Body of pancreas (tissue), 4 donors: ENCODE measurements at regions of chr14 and their contacts with region 1.

Region 1: GRCh38 chr14:76050797-76051392 is 65.3 kb downstream of the IFT43 start:
- DNase-seq: peak; percentile 58 to 67 (median 62)
- ATAC-seq: peak; percentile 64
- H3K4me3 ChIP-seq: no peak overlapping the region
- H3K27ac ChIP-seq: no peak overlapping the region
- H3K4me1 ChIP-seq: no peaks in the 10 kb centered on the region
- H3K27me3 ChIP-seq: no peaks in the 10 kb centered on the region
- CTCF ChIP-seq: peak; percentile 46 to 88 (median 77)
- POLR2A ChIP-seq: no peak

Region 2: DNA sequence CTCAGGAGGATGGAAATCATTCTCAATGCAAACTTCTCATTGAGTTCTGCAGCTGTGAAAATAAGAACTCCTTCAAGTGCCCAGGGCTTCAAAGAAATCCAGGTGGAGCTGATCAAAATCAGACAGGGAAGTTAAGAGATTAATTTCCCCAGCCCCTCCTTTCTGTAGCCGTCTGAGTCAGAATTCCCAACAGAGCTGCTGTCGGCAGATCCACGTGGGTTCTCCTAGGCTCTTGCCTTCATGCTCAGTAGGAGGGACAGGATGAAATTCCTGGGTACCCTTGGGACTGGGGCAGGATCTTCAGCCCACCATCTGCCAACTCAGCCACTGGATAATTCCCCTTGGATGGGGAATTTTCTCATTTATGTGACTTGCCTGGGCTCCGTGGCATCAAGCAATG is 82.4 kb before region 1 on chr14:
- intact Hi-C with region 1: no loop called
- DNase-seq: no peak
- ATAC-seq: peak; percentile 47
- H3K4me3 ChIP-seq: no peak overlapping the region
- H3K27ac ChIP-seq: no peak overlapping the region
- H3K4me1 ChIP-seq: peaks cover 9% of the 10 kb centered on the region
- H3K27me3 ChIP-seq: no peaks in the 10 kb centered on the region
- CTCF ChIP-seq: no peak
- POLR2A ChIP-seq: no peak

Region 3: GRCh38 chr14:76352639-76353281 is 301.9 kb after region 1 on chr14:
- intact Hi-C with region 1: loop called (anchors 10 kb)
- DNase-seq: peak; percentile 31 to 65 (median 52)
- ATAC-seq: peak; percentile 65
- H3K4me3 ChIP-seq: no peak overlapping the region
- H3K27ac ChIP-seq: no peak overlapping the region
- H3K4me1 ChIP-seq: peaks cover 6% of the 10 kb centered on the region
- H3K27me3 ChIP-seq: no peaks in the 10 kb centered on the region
- CTCF ChIP-seq: peak; percentile 69 to 84 (median 75)
- POLR2A ChIP-seq: no peak

Region 4: GRCh38 chr14:76386915-76387782 is 336.3 kb after region 1 on chr14:
- intact Hi-C with region 1: loop called (anchors 10 kb)
- DNase-seq: peak; percentile 72 to 75 (median 72)
- ATAC-seq: peak; percentile 90
- H3K4me3 ChIP-seq: no peak overlapping the region
- H3K27ac ChIP-seq: no peak overlapping the region
- H3K4me1 ChIP-seq: no peaks in the 10 kb centered on the region
- H3K27me3 ChIP-seq: no peaks in the 10 kb centered on the region
- CTCF ChIP-seq: peak; percentile 76 to 92 (median 89)
- POLR2A ChIP-seq: no peak

Region 5: DNA sequence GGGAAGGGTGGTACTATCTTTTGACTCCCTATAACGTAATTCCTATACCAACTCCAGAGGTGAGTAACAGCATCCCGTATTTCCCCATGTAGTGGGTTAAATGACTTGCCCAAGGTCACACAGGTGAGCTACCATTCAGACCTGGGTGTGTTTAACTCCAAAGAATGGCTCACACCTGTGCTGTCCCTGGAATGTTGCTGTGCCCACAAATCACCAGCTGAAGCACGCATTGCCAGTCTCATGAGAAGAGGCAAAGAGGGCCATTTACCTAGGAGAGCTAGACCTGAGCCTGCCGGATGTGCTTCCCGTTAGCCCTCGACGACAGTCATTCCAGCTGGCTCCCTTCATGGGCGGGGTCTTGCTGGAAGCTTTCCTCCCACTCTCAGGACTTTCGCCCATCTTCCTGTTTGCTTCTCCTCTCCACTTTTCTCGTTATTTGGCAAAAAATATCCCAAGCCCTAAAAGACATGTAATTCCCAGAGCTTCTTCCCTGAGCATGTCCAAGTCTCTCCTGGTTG is 603.7 kb after region 1 on chr14:
- intact Hi-C with region 1: loop called (anchors 5 kb)
- DNase-seq: no peak
- ATAC-seq: no peak
- H3K4me3 ChIP-seq: no peak overlapping the region
- H3K27ac ChIP-seq: no peak overlapping the region
- H3K4me1 ChIP-seq: no peaks in the 10 kb centered on the region
- H3K27me3 ChIP-seq: no peaks in the 10 kb centered on the region
- CTCF ChIP-seq: no peak
- POLR2A ChIP-seq: no peak